Panc1 (cell line): ENCODE measurements at regions of chr11 and their contacts with region 1.

Region 1: GRCh38 chr11:72179804-72180396 is 12.0 kb upstream of the FOLR1 start:
- DNase-seq: no peak
- ATAC-seq: no peak
- H3K4me3 ChIP-seq: no peak overlapping the region
- H3K27ac ChIP-seq: no peak overlapping the region
- H3K4me1 ChIP-seq: no peaks in the 10 kb centered on the region
- H3K27me3 ChIP-seq: no peaks in the 10 kb centered on the region
- CTCF ChIP-seq: no peak

Region 2: DNA sequence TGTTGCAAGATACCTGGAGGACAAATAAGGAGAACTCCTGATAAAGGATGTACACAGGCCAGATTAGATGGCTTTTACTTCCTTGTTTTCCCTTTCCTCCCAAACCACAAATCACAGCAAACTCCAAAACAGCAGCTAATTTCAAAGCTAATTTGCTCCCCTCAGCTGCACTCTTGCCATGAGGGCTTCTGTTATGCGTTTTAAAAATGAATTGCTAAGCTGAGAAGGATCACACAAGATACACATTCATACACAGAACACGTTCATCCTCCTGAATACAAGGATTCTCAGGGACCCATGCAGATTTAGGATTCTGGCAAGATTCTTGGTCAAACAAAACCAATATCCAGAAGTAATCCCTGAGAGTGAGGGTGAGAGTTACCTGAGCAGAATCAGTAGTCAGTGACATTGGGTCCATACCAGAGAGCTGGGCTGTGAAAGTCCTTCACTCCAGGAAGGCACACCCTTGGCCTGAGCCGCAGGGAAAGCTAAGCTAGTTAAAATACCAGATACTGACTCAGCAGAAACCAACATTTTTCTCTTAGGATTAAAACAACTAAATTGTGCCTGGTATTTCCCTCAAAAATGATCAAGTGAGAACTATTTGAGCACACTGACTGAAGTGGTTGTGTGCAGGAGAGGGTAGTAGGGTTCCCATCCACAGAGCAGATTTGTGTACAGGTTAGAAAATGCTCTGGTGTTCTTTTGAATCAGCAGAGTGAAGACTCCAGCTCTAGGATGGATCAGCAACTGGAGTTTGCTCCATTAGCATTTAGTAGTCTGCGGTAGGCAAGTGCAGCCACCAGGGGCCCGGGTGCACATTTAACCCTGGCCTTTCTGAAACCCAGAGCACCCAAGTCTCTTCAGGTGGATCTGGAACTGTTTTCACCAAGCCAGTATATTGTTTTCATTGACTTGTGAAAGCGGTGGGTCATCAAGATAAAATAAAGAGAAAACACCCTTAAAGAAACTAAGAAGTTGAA is 355.0 kb after region 1 on chr11:
- CTCF ChIA-PET with region 1: no interaction called
- POLR2A ChIA-PET with region 1: interaction called, 12 read pairs
- in situ Hi-C with region 1: no loop called
- intact Hi-C with region 1: no loop called
- DNase-seq: no peak
- ATAC-seq: peak; percentile 66; the same call in 1 of the 2 replicates
- H3K4me3 ChIP-seq: no peak overlapping the region
- H3K27ac ChIP-seq: no peak overlapping the region
- H3K4me1 ChIP-seq: no peaks in the 10 kb centered on the region
- H3K27me3 ChIP-seq: peaks cover 24% of the 10 kb centered on the region
- CTCF ChIP-seq: no peak

Region 3: GRCh38 chr11:72684236-72684912 is 504.5 kb after region 1 on chr11:
- CTCF ChIA-PET with region 1: no interaction called
- POLR2A ChIA-PET with region 1: no interaction called
- in situ Hi-C with region 1: no loop called
- intact Hi-C with region 1: no loop called
- DNase-seq: peak; percentile 35
- ATAC-seq: peak; percentile 87
- H3K4me3 ChIP-seq: no peak overlapping the region
- H3K27ac ChIP-seq: no peak overlapping the region
- H3K4me1 ChIP-seq: peaks cover 18% of the 10 kb centered on the region
- H3K27me3 ChIP-seq: 0 out of 2 replicates have a peak, but pooled peaks cover 2% of the 10 kb centered on the region
- CTCF ChIP-seq: peak; percentile 68; the same call in 1 of the 2 replicates